ENCODE measurements at regions of chr1 and their contacts with region 1.

Region 1: GRCh38 chr1:229221104-229222019 is 49.5 kb upstream of the RAB4A start:
- DNase-seq: peak; percentile 83 to 89
- H3K4me3 ChIP-seq: no peak overlapping the region
- H3K4me3 Mint-ChIP-seq: no peak overlapping the region
- H3K27ac Mint-ChIP-seq: no peak overlapping the region
- H3K4me1 ChIP-seq: peaks cover 64% of the 10 kb centered on the region
- H3K4me1 Mint-ChIP-seq: peaks cover 15% of the 10 kb centered on the region
- H3K27me3 ChIP-seq: no peaks in the 10 kb centered on the region
- H3K27me3 Mint-ChIP-seq: no peaks in the 10 kb centered on the region
- CTCF ChIP-seq: no peak

Region 2: GRCh38 chr1:228964178-228965089 is 256.9 kb before region 1 on chr1:
- CTCF ChIA-PET with region 1: no interaction called
- POLR2A ChIA-PET with region 1: no interaction called
- intact Hi-C with region 1: loop called (anchors 2 kb)
- DNase-seq: peak; percentile 69 to 71
- H3K4me3 ChIP-seq: no peak overlapping the region
- H3K4me3 Mint-ChIP-seq: peak overlapping the region; percentile 67
- H3K27ac Mint-ChIP-seq: peak overlapping the region; percentile 99
- H3K4me1 ChIP-seq: peaks cover 25% of the 10 kb centered on the region
- H3K4me1 Mint-ChIP-seq: peaks cover 17% of the 10 kb centered on the region
- H3K27me3 ChIP-seq: no peaks in the 10 kb centered on the region
- H3K27me3 Mint-ChIP-seq: no peaks in the 10 kb centered on the region
- CTCF ChIP-seq: no peak

Region 3: DNA sequence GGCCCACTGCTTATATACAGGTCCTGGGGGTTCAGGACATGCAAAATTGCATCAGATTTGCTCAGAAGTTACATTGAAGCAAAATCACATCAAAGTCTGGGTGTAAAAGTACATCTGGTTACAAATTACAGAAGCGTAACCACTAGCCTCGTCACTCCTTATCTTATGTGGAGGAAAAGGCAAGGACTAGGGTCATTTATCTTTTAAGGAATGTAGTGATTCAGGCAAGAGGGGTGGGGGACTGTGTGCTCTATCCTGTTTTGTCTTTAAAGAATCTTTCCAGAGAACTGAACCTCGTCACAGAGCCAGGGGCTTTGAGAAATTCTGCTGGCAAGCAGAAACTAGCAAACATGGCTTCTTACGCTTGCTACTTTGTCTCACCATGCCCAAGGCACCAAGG is 11.5 kb before region 1 on chr1:
- CTCF ChIA-PET with region 1: no interaction called
- POLR2A ChIA-PET with region 1: no interaction called
- intact Hi-C with region 1: loop called (anchors 1 kb)
- DNase-seq: peak; percentile 35 to 60
- H3K4me3 ChIP-seq: no peak overlapping the region
- H3K4me3 Mint-ChIP-seq: peak overlapping the region; percentile 22
- H3K27ac Mint-ChIP-seq: peak overlapping the region; percentile 79
- H3K4me1 ChIP-seq: peaks cover 31% of the 10 kb centered on the region
- H3K4me1 Mint-ChIP-seq: peaks cover 5% of the 10 kb centered on the region
- H3K27me3 ChIP-seq: no peaks in the 10 kb centered on the region
- H3K27me3 Mint-ChIP-seq: no peaks in the 10 kb centered on the region
- CTCF ChIP-seq: no peak

Measured in Caco-2 (cell line).